PC-3 (cell line): ENCODE measurements at regions of chr20 and their contacts with region 1.

Region 1: DNA sequence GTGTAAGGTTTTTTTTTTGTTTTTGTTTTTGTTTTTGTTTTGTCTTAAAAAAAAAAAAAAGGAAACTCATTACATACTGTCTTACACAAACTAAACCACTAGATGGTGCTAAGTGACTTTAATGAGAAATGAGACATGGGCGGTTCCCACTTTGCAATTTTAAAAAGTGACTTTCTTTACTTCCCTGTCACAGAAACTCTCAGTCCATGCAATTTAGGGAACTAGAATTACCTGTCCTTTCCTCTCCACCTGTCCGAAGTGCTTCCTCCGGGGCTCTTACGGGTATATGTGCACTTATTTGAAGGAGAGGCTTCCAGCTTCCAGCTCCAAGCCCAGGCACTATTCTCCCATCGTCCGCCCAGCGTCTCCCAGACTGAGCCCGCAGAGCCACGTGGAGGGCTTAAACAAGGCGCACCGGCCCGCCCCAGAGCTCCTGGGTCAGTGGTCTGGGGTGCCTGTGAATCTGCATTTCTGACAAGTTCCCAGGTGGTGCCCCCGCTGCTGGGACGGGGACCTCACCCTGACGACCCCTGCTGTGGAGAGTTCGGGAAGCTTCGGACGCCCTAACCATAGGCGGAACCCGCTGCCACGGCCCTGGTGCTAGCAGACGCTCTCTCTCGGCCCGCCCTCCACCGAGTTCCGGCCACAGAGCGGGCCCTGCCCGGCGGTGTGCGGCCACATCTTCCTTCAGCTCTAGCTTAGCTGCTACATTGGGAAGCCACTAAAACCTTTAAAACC is 26.1 kb downstream of the BFSP1 start:
- DNase-seq: peak; percentile 84
- ATAC-seq: peak; percentile 86
- H3K4me3 ChIP-seq: peak overlapping the region; percentile 80
- H3K27ac ChIP-seq: peak overlapping the region; percentile 25; the same call in 1 of the 2 replicates
- H3K4me1 ChIP-seq: peaks cover 9% of the 10 kb centered on the region; the same call in 1 of the 2 replicates
- H3K27me3 ChIP-seq: no peaks in the 10 kb centered on the region
- CTCF ChIP-seq: peak; percentile 91

Region 2: DNA sequence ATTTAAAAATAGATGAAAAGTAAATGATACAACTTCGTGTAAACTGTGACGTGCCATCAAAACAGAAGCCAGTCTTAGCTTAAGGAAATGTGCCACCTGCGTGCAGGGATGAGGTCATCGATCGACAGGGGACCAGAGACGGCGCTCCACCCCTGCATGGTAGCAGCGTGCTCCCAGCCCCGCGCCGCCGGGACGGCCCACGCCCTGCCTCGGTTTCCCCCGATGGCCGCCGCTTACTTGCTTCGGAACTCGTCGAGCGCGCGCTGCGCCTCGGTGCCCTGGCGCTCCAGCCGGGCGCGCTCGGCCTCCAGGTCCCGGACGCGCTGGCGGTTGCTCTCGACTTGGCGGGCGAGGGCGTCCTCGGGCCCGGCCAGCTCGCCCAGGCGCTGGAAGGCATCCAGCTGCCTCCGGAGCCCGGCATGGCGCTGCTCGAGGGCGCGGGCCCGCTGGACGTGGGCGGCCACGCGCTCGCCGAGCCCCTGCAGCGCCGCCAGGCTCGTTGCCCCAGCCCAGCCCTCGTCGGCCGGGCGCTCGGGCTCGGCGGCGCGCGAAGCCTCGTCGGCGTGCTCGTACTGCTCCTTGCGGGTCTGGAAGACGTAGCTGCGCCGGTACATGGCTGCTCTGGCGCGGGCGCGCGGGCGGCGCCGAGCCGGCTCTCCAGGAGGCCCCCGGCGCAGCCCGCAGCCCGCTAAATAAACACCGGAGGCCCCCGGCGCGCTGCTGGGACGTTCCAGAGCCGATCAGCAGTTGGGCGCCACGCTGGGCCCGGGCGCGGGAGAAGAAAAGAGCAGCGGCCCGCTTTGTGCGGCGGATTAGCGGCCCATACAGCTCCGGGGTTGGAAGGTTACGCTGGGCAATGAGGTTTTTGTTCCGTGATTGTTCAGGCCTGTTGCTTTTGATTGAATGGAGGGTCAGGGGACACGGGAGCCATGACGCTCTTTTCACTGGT is 25.9 kb after region 1 on chr20 and contains the start of gene BFSP1:
- CTCF ChIA-PET with region 1: no interaction called
- POLR2A ChIA-PET with region 1: no interaction called
- intact Hi-C with region 1: loop called (anchors 2 kb)
- DNase-seq: peak; percentile 69
- ATAC-seq: peak; percentile 73
- H3K4me3 ChIP-seq: peak within 1 kb of the TSS; percentile 87
- H3K27ac ChIP-seq: peak within 1 kb of the TSS; percentile 11; the same call in 1 of the 2 replicates
- H3K4me1 ChIP-seq: peaks cover 15% of the 10 kb centered on the region
- H3K27me3 ChIP-seq: no peaks in the 10 kb centered on the region
- CTCF ChIP-seq: no peak
- total RNA-seq, gene BFSP1: 2.2 and 2.7 TPM in 2 replicates

Region 3: GRCh38 chr20:17617551-17618223 is 112.6 kb after region 1 on chr20:
- CTCF ChIA-PET with region 1: interaction called, 5 read pairs
- POLR2A ChIA-PET with region 1: no interaction called
- intact Hi-C with region 1: loop called (anchors 1 kb)
- DNase-seq: peak; percentile 53
- ATAC-seq: peak; percentile 53
- H3K4me3 ChIP-seq: no peak overlapping the region
- H3K27ac ChIP-seq: no peak overlapping the region
- H3K4me1 ChIP-seq: no peaks in the 10 kb centered on the region
- H3K27me3 ChIP-seq: no peaks in the 10 kb centered on the region
- CTCF ChIP-seq: peak; percentile 84

Region 4: GRCh38 chr20:17898548-17898994 is 393.5 kb after region 1 on chr20:
- CTCF ChIA-PET with region 1: no interaction called
- POLR2A ChIA-PET with region 1: no interaction called
- intact Hi-C with region 1: loop called (anchors 1 kb)
- DNase-seq: peak; percentile 86
- ATAC-seq: peak; percentile 75
- H3K4me3 ChIP-seq: no peak overlapping the region
- H3K27ac ChIP-seq: no peak overlapping the region
- H3K4me1 ChIP-seq: no peaks in the 10 kb centered on the region
- H3K27me3 ChIP-seq: no peaks in the 10 kb centered on the region
- CTCF ChIP-seq: peak; percentile 98